OCI-LY7 (cell line): ENCODE measurements at regions of chr18 and their contacts with region 1.

Region 1: GRCh38 chr18:3245853-3246634 is 1.6 kb upstream of the MYL12A start:
- DNase-seq: peak; percentile 94
- H3K4me3 ChIP-seq: peak overlapping the region; percentile 81
- H3K27ac ChIP-seq: peak overlapping the region; percentile 84
- H3K4me1 ChIP-seq: peaks cover 43% of the 10 kb centered on the region
- CTCF ChIP-seq: peak; percentile 98

Region 2: DNA sequence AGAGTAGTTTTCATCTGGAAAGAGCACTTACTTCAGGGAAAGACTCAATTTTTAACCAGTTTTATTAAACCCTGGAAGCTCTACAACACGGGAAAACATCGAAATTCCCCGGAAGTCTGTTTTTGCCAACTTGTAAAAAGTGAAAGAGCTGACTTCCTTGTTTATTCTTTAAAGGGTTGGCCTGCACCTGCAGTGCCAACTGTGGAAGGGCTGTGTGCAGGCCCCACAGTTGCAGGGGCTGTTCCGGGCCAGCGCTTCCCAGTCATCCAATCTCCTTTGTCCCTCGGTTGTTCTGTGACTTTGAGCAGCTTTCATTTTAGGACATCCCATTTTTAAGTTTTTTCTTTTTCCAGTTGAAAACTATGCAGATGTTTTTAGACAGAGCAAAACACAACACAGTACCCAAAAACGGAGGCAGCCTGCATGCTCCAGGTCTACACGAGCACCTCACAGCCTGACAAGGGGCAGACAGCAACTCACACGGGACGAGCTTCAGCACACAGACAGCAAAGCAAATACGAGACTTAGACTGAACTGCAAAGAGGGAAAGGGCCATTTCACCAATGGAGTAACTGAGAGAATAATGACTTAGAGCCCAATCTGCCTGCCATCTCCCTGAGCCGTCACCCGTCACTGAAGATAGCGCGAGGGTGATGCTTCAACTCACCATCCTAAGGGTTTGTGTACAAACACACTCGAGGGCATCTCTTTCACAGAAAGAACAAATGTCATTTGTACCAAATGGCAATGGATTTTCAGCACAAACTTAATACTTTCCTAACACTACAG is 328.6 kb before region 1 on chr18:
- CTCF ChIA-PET with region 1: no interaction called
- POLR2A ChIA-PET with region 1: interaction called, 3 read pairs
- intact Hi-C with region 1: loop called (anchors 5 kb)
- DNase-seq: peak; percentile 90
- H3K4me3 ChIP-seq: peak overlapping the region; percentile 51
- H3K27ac ChIP-seq: peak overlapping the region; percentile 92
- H3K4me1 ChIP-seq: peaks cover 31% of the 10 kb centered on the region
- CTCF ChIP-seq: no peak

Region 3: DNA sequence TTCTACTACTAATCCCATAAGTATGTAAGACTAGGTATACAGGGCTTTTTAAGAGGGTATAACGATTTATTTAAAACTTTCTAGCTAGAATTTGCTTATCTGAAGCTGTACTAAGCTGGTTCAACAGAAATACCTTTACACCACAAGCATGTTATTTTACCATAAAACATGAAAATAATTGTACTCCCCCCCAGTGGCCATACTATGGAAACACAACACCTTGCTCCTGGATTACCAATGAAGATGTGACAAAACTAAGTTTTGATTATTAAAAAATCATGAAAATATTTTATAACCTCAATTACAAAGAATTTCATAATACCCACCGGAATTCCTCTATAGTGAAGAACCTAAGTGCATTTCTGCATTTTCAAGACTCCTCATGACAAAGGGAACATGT is 260.4 kb before region 1 on chr18:
- CTCF ChIA-PET with region 1: interaction called, 5 read pairs
- POLR2A ChIA-PET with region 1: no interaction called
- intact Hi-C with region 1: loop called (anchors 2 kb)
- DNase-seq: peak; percentile 71
- H3K4me3 ChIP-seq: no peak overlapping the region
- H3K27ac ChIP-seq: no peak overlapping the region
- H3K4me1 ChIP-seq: peaks cover 48% of the 10 kb centered on the region
- CTCF ChIP-seq: peak; percentile 94

Region 4: GRCh38 chr18:3012964-3013804 is 232.9 kb before region 1 on chr18 and contains the start of gene LPIN2:
- CTCF ChIA-PET with region 1: no interaction called
- POLR2A ChIA-PET with region 1: no interaction called
- intact Hi-C with region 1: loop called (anchors 1 kb)
- DNase-seq: peak; percentile 98
- H3K4me3 ChIP-seq: peak within 1 kb of the TSS; percentile 72
- H3K27ac ChIP-seq: peak within 1 kb of the TSS; percentile 50
- H3K4me1 ChIP-seq: peaks cover 51% of the 10 kb centered on the region
- CTCF ChIP-seq: no peak
- total RNA-seq, gene LPIN2: 18.7 and 20.1 TPM in 2 replicates

Region 5: DNA sequence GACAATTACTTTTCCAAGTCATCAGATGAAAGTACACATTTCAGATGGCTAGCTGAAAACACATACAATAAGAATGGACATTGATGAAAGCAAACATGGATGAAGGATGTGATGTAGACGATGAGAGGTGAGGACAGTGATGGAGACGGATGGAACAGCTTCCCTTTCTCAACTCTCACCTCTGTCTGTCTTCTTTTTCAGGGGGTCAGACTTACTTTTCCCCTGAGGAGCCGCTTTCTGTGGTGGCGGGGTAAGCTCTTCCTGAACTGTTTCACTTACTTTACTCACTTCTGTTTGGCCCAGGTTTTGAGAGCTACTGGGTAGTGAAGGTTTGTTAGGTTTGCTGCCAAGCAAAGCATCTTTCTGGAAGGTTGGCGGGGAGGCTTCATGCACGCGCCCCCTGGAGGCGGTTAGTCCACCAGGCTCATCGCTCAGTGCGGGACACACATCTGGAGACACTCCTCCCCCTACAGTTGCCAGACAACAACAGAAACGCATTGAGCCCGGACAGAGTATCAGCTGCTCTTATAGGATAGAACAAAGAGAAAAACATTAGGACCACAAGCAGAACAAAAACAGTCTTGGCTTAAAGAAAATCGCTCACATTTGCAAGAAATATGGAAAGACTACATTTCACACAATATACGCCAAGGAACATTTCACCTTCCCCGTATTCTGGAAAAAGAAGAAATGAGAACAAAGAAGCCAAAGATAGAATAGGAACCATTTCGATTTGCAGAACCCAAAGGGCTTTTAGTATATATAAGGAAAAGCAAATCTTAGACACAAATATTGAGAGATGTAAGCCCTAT is 116.8 kb before region 1 on chr18:
- CTCF ChIA-PET with region 1: interaction called, 3 read pairs
- POLR2A ChIA-PET with region 1: interaction called, 3 read pairs
- intact Hi-C with region 1: loop called (anchors 1 kb)
- DNase-seq: peak; percentile 90
- H3K4me3 ChIP-seq: peak overlapping the region; percentile 6
- H3K27ac ChIP-seq: no peak overlapping the region
- H3K4me1 ChIP-seq: peaks cover 10% of the 10 kb centered on the region
- CTCF ChIP-seq: peak; percentile 99

Region 6: DNA sequence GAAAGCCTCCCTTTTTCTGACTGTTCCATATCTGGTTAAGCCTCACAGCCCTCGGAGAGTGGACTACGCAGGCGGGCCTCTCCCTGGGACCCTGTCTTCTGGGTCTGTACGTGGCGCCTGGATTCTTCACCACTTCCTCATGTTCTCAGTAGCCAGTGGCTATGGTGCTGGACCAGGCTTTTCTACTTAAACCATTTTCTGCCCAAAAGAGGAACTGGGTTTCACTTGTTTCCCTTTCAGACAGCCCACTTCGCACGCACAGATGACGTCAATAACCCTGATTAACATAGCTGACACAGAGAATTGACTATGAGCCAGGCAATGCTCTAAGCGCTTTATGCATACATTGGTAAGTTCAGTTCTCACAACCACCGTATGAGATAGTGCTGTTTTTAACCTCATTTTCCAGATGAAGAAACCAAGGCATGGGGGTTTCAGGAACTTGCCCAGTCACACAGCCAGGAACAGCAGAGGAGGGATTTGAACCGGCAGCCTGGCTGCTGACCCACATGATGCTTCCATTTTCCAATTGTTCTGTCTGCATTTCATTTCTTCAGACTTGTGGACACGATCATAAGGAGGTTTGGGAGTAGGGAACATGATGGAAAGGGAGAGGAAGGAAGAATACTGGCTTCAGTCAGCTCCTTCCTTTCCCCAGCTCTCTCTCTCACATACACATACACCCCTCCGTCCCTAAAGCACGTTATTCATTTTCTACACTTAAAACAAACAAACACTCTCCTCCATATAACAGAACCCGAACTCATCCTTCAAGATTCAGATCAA is 67.9 kb before region 1 on chr18:
- CTCF ChIA-PET with region 1: no interaction called
- POLR2A ChIA-PET with region 1: interaction called, 50 read pairs
- intact Hi-C with region 1: loop called (anchors 1 kb)
- DNase-seq: peak; percentile 90
- H3K4me3 ChIP-seq: peak overlapping the region; percentile 20
- H3K27ac ChIP-seq: peak overlapping the region; percentile 91
- H3K4me1 ChIP-seq: peaks cover 53% of the 10 kb centered on the region
- CTCF ChIP-seq: no peak

Region 7: GRCh38 chr18:3305354-3305762 is 59.3 kb after region 1 on chr18:
- CTCF ChIA-PET with region 1: no interaction called
- POLR2A ChIA-PET with region 1: no interaction called
- intact Hi-C with region 1: no loop called
- DNase-seq: no peak
- H3K4me3 ChIP-seq: no peak overlapping the region
- H3K27ac ChIP-seq: no peak overlapping the region
- H3K4me1 ChIP-seq: no peaks in the 10 kb centered on the region
- CTCF ChIP-seq: no peak

Region 8: GRCh38 chr18:3931542-3932112 is 685.6 kb after region 1 on chr18:
- CTCF ChIA-PET with region 1: interaction called, 10 read pairs
- POLR2A ChIA-PET with region 1: no interaction called
- intact Hi-C with region 1: no loop called
- DNase-seq: no peak
- H3K4me3 ChIP-seq: no peak overlapping the region
- H3K27ac ChIP-seq: no peak overlapping the region
- H3K4me1 ChIP-seq: peaks cover 26% of the 10 kb centered on the region
- CTCF ChIP-seq: peak; percentile 67